ENCODE measurements at regions of chr9 and their contacts with region 1.

Region 1: GRCh38 chr9:132250324-132251262 is 88.7 kb downstream of the NTNG2 start:
- DNase-seq: no peak
- H3K4me3 ChIP-seq: no peak overlapping the region
- H3K27ac ChIP-seq: no peak overlapping the region
- H3K4me1 ChIP-seq: peaks cover 0 to 9% (median 0%) of the 10 kb centered on the region in 3 donors
- H3K27me3 ChIP-seq: peaks cover 0 to 68% (median 1%) of the 10 kb centered on the region in 4 donors
- CTCF ChIP-seq: no peak
- POLR2A ChIP-seq: no peak

Region 2: GRCh38 chr9:131762356-131762932 is 488.1 kb before region 1 on chr9:
- intact Hi-C with region 1: loop called (anchors 5 kb)
- DNase-seq: no peak
- H3K4me3 ChIP-seq: no peak overlapping the region
- H3K27ac ChIP-seq: no peak overlapping the region
- H3K4me1 ChIP-seq: peaks cover 0 to 18% (median 3%) of the 10 kb centered on the region in 3 donors
- H3K27me3 ChIP-seq: peaks cover 0 to 46% (median 0%) of the 10 kb centered on the region in 4 donors
- CTCF ChIP-seq: peak; percentile 89 to 96 (median 94)
- POLR2A ChIP-seq: no peak

Region 3: DNA sequence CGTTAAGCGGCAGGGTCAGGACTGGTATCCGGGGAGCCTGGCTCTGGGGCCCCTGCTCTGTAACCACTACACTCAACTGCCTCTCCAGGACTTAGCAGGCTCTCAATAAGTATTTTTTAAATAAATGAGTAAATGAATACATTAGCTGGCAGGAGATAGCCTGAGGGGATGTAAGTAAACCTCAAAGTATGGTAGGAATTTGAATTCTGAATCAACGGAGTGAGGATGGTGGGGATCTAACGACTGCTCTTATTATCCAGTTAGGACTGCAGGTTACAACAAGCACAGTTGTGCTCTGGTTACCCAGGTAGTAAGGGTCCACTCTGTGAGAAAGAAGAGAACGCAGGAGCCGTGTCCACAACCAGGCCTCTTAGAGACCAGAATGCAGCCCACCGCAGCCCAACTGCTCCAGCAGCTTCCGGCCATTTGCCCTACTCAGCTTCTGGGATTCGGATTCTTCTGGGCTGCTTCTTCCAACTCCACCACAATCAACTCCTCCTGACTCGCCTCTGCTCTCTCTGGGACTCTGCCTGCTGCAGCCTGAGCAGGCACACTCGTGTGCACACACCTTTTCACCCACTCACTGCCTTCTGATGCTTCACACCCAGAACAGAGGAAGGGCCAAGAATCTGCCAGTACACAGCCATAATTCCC is 223.5 kb before region 1 on chr9:
- intact Hi-C with region 1: no loop called
- DNase-seq: no peak
- H3K4me3 ChIP-seq: no peak overlapping the region
- H3K27ac ChIP-seq: peak overlapping the region in 3 of 4 donors; percentile 35 to 59 (median 50)
- H3K4me1 ChIP-seq: peaks cover 17 to 66% (median 23%) of the 10 kb centered on the region in 3 donors
- H3K27me3 ChIP-seq: no peaks in the 10 kb centered on the region
- CTCF ChIP-seq: no peak
- POLR2A ChIP-seq: no peak

Region 4: DNA sequence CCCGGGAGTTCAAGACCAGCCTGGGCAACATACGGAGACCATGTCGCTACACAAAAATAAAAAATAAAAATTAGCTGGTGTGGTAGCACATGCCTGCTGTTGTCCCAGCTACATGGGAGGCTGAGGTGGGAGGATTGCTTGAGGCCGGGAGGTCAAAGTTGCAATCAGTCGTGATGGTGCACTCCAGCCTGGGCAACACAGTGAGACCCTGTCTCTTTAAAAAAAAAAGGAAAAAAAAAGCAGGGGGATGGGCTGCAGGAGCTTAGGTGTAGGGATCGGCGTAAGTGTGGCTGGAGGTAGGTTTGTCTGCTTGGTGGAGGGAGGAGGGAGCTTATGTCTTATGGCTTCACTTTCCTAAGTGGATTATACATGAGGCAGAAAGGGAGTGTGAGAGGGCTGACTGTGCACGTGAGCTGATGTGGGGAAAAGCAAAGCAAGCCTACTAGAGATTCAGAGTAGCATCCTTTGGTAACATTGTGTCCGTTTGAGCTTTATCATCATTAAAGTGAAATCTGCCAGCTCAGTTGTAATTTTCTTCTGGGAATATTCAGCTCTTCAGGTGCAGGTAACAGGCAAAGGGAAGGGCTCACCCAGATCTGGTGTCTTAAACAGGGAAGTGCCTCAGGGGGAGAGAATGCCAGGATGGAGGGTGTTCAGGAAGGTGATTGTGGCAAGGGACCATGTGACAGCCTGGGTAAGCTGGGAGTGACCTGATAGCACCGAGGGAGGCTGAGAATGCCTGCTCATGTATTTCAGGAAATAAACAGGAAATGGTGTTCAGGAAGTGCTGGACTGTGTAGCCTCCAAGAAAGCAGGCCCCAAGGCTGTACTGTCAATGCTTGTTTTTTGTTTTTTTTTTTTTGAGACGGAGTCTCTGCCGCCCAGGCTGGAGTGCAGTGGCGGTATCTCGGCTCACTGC is 121.8 kb after region 1 on chr9:
- intact Hi-C with region 1: no loop called
- DNase-seq: no peak
- H3K4me3 ChIP-seq: no peak overlapping the region
- H3K27ac ChIP-seq: peak overlapping the region; percentile 39 to 84 (median 68)
- H3K4me1 ChIP-seq: peaks cover 6 to 37% (median 12%) of the 10 kb centered on the region in 3 donors
- H3K27me3 ChIP-seq: no peaks in the 10 kb centered on the region
- CTCF ChIP-seq: no peak
- POLR2A ChIP-seq: no peak

Region 5: DNA sequence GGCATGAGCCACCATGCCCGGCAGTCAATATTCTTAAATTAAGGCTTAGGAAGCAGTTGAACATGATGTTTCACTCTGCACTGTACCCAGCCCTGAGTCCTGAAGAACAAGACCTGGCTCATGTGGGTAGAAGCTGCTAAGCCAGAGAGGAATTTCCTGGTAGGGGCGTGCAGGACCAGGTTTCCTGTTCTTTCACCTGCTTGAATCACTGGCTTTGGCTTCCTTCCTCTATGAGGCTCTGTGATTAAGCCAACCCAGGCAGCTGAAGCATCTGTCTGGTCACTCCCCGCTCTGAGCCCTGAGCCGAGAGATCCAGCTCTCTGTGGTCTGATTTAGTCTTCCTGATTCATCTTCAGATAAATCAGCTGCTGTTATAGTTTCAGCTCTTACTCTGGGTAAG is 188.6 kb after region 1 on chr9:
- intact Hi-C with region 1: no loop called
- DNase-seq: no peak
- H3K4me3 ChIP-seq: no peak overlapping the region
- H3K27ac ChIP-seq: no peak overlapping the region
- H3K4me1 ChIP-seq: no peaks in the 10 kb centered on the region
- H3K27me3 ChIP-seq: peaks cover 0 to 84% (median 0%) of the 10 kb centered on the region in 4 donors
- CTCF ChIP-seq: no peak
- POLR2A ChIP-seq: no peak

Measured in esophagus squamous epithelium (tissue), 5 donors.